Esophagus squamous epithelium (tissue), 5 donors: ENCODE measurements at regions of chr16 and their contacts with region 1.

Region 1: DNA sequence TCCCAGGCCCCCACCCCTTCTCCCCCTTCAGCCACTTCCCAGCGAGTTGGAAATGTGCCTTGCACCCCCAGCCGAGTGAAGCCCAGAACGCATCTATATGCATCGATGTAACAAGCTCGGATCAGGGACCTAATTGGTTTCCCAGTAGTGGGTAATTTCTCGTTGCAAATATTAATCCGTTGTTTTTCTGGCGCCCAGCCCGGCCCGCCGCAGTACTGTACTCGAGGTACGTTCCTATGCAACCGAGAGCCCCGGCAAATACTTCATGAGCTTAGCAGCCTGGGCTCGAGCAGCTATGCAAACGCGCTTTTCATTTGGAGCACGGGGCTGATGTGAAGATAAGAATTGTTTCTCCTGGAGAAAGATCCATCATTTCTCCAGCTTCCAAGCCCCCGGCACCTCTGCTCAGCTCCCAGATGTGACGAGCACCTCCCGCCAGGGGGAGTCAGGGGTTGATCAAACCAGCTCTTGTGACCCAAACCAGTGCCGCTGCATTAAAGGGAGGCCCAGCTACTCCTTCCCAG is 229.8 kb downstream of the KATNIP start:
- DNase-seq: no peak
- H3K4me3 ChIP-seq: no peak overlapping the region
- H3K27ac ChIP-seq: no peak overlapping the region
- H3K4me1 ChIP-seq: peaks cover 0 to 12% (median 0%) of the 10 kb centered on the region in 3 donors
- H3K27me3 ChIP-seq: no peaks in the 10 kb centered on the region
- CTCF ChIP-seq: peak in 1 of 6 experiments; percentile 8
- POLR2A ChIP-seq: no peak

Region 2: GRCh38 chr16:27847030-27847550 is 67.4 kb after region 1 on chr16:
- intact Hi-C with region 1: loop called (anchors 10 kb)
- DNase-seq: no peak
- H3K4me3 ChIP-seq: no peak overlapping the region
- H3K27ac ChIP-seq: no peak overlapping the region
- H3K4me1 ChIP-seq: no peaks in the 10 kb centered on the region
- H3K27me3 ChIP-seq: peaks cover 0 to 42% (median 0%) of the 10 kb centered on the region in 4 donors
- CTCF ChIP-seq: no peak
- POLR2A ChIP-seq: no peak